Endothelial cell of umbilical vein (primary cell): ENCODE measurements at regions of chr5 and their contacts with region 1.

Region 1: DNA sequence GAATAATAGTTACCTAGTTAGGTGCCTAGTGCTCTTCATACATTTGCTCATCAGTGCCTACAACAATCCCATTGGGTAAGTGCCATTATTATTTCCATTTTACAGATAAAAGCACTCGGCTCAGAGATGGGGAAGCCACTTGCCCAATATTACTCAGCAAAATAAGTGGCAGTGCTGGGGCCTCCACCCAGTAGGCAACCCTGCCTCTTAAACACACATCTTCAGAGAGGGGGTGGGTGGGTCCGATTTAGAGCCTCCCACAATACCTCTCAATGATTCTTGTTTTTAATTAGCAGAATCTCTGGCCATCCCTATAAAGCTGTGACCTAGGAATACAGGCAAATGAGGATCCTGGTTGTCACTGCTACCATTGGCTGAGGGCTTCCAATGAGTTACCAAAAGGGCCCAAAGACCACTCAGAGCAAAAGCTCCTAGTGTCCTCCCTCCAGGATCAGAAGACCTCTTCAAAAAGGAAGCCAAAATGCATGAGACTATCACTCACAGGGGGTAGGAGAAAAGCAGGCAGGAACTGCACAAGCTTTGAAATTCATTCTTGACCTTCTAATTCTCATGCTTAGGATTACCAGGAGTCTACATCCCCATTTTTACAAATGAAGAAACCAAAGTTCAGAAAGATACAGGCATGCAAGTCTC is 36.1 kb upstream of the UBE2D2 start:
- DNase-seq: no peak
- H3K4me3 ChIP-seq: no peak overlapping the region
- H3K27ac ChIP-seq: no peak overlapping the region
- H3K4me1 ChIP-seq: no peaks in the 10 kb centered on the region
- H3K27me3 ChIP-seq: no peaks in the 10 kb centered on the region
- CTCF ChIP-seq: no peak
- POLR2A ChIP-seq: no peak

Region 2: GRCh38 chr5:139417214-139417613 is 107.8 kb before region 1 on chr5:
- CTCF ChIA-PET with region 1: interaction called, 7 read pairs
- POLR2A ChIA-PET with region 1: no interaction called
- dilution Hi-C with region 1: loop called (anchors 10 kb)
- intact Hi-C with region 1: no loop called
- DNase-seq: peak; percentile 26
- H3K4me3 ChIP-seq: no peak overlapping the region
- H3K27ac ChIP-seq: no peak overlapping the region
- H3K4me1 ChIP-seq: peaks cover 25% of the 10 kb centered on the region
- H3K27me3 ChIP-seq: no peaks in the 10 kb centered on the region
- CTCF ChIP-seq: no peak
- POLR2A ChIP-seq: no peak

Region 3: DNA sequence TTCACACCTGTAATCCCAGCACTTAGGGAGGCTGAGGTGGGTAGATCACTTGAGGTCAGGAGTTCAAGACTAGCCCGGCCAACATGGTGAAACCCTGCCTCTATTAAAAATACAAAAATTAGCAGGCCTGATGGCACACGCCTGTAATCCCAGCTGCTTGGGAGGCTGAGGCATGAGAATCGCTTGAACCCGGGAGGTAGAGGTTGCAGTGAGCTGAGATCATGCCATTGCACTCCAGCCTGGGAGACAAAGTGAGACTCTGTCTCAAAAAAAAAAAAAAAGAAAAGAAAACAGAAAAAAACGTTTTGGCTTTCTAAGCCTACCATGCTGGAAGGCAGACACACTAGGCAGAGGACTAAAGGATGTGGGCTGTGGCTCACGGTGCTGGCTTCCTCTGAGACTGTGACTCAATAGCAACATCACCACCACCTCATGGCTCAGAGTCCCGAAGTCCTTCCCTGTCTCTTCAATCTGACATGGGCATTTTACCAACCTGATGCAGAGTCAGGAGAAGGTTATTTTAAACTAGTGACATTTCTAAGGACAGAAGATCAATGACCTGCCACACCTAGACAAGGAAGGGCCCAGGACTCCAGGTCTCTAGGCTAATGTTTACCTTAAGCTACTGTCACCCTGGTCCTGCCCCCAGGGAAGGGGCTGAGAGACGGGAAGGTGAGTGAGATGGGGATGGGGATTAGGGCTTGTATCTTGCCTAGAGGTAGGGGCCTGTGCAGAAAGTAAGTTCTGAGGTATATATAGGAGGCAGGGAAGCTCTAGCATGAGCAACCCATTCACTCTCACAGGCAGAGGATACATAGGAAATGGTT is 66.3 kb before region 1 on chr5:
- CTCF ChIA-PET with region 1: no interaction called
- POLR2A ChIA-PET with region 1: no interaction called
- dilution Hi-C with region 1: no loop called
- intact Hi-C with region 1: no loop called
- DNase-seq: peak; percentile 82
- H3K4me3 ChIP-seq: peak overlapping the region in 1 of 3 experiments; percentile 97
- H3K27ac ChIP-seq: peak overlapping the region; percentile 99
- H3K4me1 ChIP-seq: peaks cover 41% of the 10 kb centered on the region
- H3K27me3 ChIP-seq: no peaks in the 10 kb centered on the region
- CTCF ChIP-seq: no peak
- POLR2A ChIP-seq: no peak

Region 4: DNA sequence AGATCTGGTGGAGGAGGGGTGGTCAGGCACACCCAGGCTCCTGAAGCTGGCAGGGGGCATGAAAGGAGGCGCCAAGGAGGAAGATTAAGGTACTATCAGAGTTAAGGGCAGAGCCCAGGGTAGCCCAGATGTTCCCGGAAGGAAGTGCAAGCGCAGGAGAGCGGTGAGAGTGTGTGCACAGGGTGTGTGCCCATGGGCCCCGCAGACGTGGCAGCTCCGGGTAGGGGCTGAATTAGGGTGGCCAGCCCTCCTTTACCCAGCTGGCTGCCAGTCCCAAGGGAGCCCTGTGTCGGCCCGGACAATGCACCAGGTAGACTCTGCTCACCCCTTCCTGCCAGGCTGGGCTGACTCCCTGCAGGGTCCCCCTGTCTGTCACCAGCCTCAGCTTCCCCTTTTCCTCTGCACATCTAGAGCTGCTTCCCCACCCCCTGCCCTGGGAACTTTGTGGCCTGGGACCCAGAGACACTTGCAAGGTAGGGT is 54.2 kb before region 1 on chr5 and contains the start of gene SMIM33:
- CTCF ChIA-PET with region 1: no interaction called
- POLR2A ChIA-PET with region 1: no interaction called
- dilution Hi-C with region 1: no loop called
- intact Hi-C with region 1: no loop called
- DNase-seq: no peak
- H3K4me3 ChIP-seq: no peak within 1 kb of the TSS
- H3K27ac ChIP-seq: no peak within 1 kb of the TSS
- H3K4me1 ChIP-seq: peaks cover 18% of the 10 kb centered on the region
- H3K27me3 ChIP-seq: no peaks in the 10 kb centered on the region
- CTCF ChIP-seq: no peak
- POLR2A ChIP-seq: no peak
- total RNA-seq, gene SMIM33: not detected in 2 replicates

Region 5: GRCh38 chr5:139882961-139883539 is 358.0 kb after region 1 on chr5:
- CTCF ChIA-PET with region 1: no interaction called
- POLR2A ChIA-PET with region 1: no interaction called
- dilution Hi-C with region 1: no loop called
- intact Hi-C with region 1: no loop called
- DNase-seq: no peak
- H3K4me3 ChIP-seq: no peak overlapping the region
- H3K27ac ChIP-seq: no peak overlapping the region
- H3K4me1 ChIP-seq: no peaks in the 10 kb centered on the region
- H3K27me3 ChIP-seq: peaks cover 0 to 2% of the 10 kb centered on the region in 2 experiments
- CTCF ChIP-seq: no peak
- POLR2A ChIP-seq: no peak